CD8-positive, alpha-beta T cell (primary cell): ENCODE measurements at regions of chr5 and their contacts with region 1.

Region 1: GRCh38 chr5:129135633-129136032 is 41.1 kb downstream of the ISOC1 start:
- DNase-seq: peak in 2 of 9 experiments; percentile 15 to 40
- ATAC-seq: no peak
- H3K4me3 ChIP-seq: no peak overlapping the region
- H3K4me3 Mint-ChIP-seq: no peak overlapping the region
- H3K27ac ChIP-seq: no peak overlapping the region
- H3K27ac Mint-ChIP-seq: no peak overlapping the region
- H3K4me1 ChIP-seq: no peaks in the 10 kb centered on the region
- H3K4me1 Mint-ChIP-seq: no peaks in the 10 kb centered on the region
- H3K27me3 ChIP-seq: no peaks in the 10 kb centered on the region
- H3K27me3 Mint-ChIP-seq: peaks cover 2% of the 10 kb centered on the region
- CTCF ChIP-seq: no peak

Region 2: GRCh38 chr5:128228008-128228407 is 907.6 kb before region 1 on chr5:
- CTCF ChIA-PET with region 1: no interaction called
- POLR2A ChIA-PET with region 1: no interaction called
- intact Hi-C with region 1: loop called in 1 of 2 experiments (anchors 10 kb)
- DNase-seq: no peak
- ATAC-seq: no peak
- H3K4me3 ChIP-seq: no peak overlapping the region
- H3K4me3 Mint-ChIP-seq: no peak overlapping the region
- H3K27ac ChIP-seq: no peak overlapping the region
- H3K27ac Mint-ChIP-seq: no peak overlapping the region
- H3K4me1 ChIP-seq: no peaks in the 10 kb centered on the region
- H3K4me1 Mint-ChIP-seq: no peaks in the 10 kb centered on the region
- H3K27me3 ChIP-seq: no peaks in the 10 kb centered on the region
- H3K27me3 Mint-ChIP-seq: no peaks in the 10 kb centered on the region
- CTCF ChIP-seq: no peak

Region 3: GRCh38 chr5:129921204-129921603 is 785.6 kb after region 1 on chr5:
- CTCF ChIA-PET with region 1: no interaction called
- POLR2A ChIA-PET with region 1: no interaction called
- intact Hi-C with region 1: no loop called
- DNase-seq: no peak
- ATAC-seq: no peak
- H3K4me3 ChIP-seq: no peak overlapping the region
- H3K4me3 Mint-ChIP-seq: no peak overlapping the region
- H3K27ac ChIP-seq: no peak overlapping the region
- H3K27ac Mint-ChIP-seq: no peak overlapping the region
- H3K4me1 ChIP-seq: no peaks in the 10 kb centered on the region
- H3K4me1 Mint-ChIP-seq: no peaks in the 10 kb centered on the region
- H3K27me3 ChIP-seq: no peaks in the 10 kb centered on the region
- H3K27me3 Mint-ChIP-seq: no peaks in the 10 kb centered on the region
- CTCF ChIP-seq: no peak